CD4-positive, alpha-beta T cell (primary cell): ENCODE measurements at regions of chr4 and their contacts with region 1.

Region 1: DNA sequence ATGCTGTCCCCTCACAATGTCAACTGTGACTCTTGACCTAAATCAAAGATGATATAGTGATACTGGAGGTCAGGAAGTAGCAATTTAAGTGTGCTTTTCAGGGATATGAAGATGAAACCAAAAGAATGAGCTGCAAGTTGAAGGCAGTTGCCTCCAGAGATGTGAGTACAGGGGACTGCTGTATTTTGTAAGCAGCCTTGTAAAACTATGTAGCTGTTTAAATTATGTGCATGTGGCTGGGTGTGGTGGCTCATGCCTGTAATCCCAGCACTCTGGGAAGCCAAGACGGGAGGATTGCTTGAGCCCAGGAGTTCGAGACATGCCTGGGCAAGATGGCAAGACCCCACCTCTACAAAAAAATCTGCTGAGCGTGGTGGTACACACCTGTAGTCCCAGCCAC is 15.1 kb upstream of the TNIP2 start:
- DNase-seq: no peak
- ATAC-seq: no peak
- H3K4me3 ChIP-seq: no peak overlapping the region
- H3K4me3 Mint-ChIP-seq: no peak overlapping the region
- H3K27ac ChIP-seq: no peak overlapping the region
- H3K27ac Mint-ChIP-seq: no peak overlapping the region
- H3K4me1 ChIP-seq: peaks cover 7% of the 10 kb centered on the region
- H3K4me1 Mint-ChIP-seq: peaks cover 10% of the 10 kb centered on the region
- H3K27me3 ChIP-seq: no peaks in the 10 kb centered on the region
- H3K27me3 Mint-ChIP-seq: no peaks in the 10 kb centered on the region
- CTCF ChIP-seq: no peak

Region 2: DNA sequence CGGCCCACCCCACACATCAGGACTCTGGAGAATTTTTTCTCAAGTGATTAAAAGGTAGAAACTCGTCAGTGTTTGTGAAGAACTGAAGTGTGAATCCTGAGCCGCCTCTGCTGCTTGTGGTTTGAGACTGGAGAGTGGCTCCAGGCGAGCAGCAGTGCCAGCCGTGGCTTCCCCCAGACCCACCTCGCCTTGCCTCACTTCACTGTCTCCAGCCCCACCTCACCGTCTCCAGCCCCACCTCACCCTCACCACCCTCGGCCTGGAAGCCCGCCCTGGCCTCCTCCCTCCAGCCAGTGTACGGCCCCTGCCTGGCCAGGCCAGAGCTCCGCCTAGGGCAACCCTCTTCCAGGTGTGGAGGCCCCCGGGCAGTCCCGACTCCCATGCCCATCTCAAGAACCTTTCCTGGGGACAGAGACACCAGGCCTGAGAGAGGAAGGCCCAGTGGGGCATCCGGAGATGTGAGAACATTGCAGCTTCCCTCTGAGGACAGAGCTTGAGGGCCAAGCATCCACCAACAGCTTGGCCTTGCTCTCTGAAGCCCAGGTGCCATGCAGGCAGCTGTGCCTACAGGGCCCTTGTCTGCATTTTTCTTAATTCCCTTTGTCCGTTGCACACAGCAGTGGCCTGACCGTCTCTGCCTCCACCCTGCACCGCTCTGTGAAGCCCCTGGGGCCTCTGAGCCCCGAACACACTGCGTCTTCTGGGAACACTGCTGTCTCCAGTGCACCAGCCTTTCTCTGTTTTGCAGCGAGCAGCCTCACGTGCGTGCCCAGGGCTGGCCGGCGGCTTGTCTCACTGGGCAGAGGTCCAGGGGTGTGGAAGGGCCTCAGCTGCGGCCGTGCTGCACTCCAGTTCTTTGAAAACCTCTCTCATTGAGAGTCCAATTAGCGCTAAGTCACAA is 35.4 kb after region 1 on chr4:
- CTCF ChIA-PET with region 1: no interaction called
- POLR2A ChIA-PET with region 1: no interaction called
- intact Hi-C with region 1: loop called (anchors 5 to 10 kb)
- DNase-seq: no peak
- ATAC-seq: no peak
- H3K4me3 ChIP-seq: no peak overlapping the region
- H3K4me3 Mint-ChIP-seq: no peak overlapping the region
- H3K27ac ChIP-seq: no peak overlapping the region
- H3K27ac Mint-ChIP-seq: no peak overlapping the region
- H3K4me1 ChIP-seq: peaks cover 57% of the 10 kb centered on the region
- H3K4me1 Mint-ChIP-seq: peaks cover 10% of the 10 kb centered on the region
- H3K27me3 ChIP-seq: no peaks in the 10 kb centered on the region
- H3K27me3 Mint-ChIP-seq: no peaks in the 10 kb centered on the region
- CTCF ChIP-seq: no peak